ENCODE measurements at regions of chr1 and their contacts with region 1.

Region 1: DNA sequence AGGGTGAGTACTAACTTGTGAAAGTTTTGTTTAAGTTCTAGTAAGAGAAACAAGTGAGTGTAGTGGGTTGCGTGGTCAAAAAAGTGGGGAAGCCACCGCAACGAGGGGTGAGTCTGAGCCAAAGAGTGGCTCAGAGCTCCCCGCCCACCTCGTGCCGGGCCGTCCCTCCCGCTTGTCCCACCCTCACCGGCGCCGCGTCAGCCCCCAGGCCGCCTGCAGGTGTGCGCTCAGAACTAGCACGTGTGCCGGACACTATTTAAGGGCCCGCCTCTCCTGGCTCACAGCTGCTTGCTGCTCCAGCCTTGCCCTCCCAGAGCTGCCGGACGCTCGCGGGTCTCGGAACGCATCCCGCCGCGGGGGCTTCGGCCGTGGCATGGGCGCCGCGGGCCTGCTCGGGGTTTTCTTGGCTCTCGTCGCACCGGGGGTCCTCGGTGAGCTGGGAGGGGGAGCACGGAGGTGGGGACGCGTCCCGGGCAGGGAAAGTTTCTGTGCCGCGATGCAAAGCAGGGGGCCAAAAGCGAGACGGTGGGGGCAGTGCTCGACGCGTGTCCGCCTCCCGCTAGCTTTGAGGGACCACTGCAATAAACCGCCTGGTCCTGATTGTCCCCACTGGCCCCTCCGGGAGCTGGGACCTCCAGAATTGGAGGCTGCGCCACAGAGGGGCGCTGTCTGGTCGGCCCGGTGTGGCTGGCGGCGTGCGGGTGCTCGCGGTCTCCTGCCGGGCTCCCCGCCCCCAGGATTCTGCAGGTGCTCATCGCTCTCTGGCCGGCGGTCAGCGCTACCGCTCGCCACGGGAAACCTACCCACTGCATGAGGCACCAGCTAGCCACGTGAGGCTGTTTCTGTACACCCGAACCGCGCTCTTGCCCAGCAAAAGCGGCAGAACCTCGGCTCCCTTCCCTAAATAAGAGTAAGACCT is at the start of gene CR2:
- DNase-seq: peak; percentile 42 to 74 (median 52)
- ATAC-seq: peak; percentile 76 to 80
- H3K4me3 Mint-ChIP-seq: peak within 1 kb of the TSS in 9 of 10 donors; percentile 69 to 87 (median 78)
- H3K27ac Mint-ChIP-seq: peak within 1 kb of the TSS in 6 of 10 donors; percentile 60 to 84 (median 66)
- H3K4me1 Mint-ChIP-seq: peaks cover 0 to 14% (median 8%) of the 10 kb centered on the region in 4 donors
- H3K27me3 Mint-ChIP-seq: peaks cover 0 to 23% (median 4%) of the 10 kb centered on the region in 5 donors
- polyA plus RNA-seq, gene CR2: 10.9 to 17.1 (median 11.2) TPM

Region 2: DNA sequence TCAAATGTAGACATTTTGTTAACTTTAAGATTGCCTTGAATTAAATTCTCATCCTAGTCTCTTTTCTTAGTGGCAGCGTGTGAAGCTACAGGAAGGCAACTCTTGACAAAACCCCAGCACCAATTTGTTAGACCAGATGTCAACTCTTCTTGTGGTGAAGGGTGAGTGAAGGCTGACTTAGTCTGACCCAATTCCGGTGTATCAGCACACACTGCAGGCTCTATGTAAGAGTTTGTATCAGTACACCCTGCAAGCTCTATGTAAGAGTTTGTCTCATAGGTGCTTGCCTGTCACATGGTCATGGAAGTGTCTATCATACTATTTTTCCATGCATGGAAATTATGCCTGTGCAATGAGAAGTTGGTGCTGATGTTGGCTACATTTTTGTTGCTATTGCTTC is 16.6 kb after region 1 on chr1:
- POLR2A ChIA-PET with region 1: interaction called, 11 read pairs
- DNase-seq: peak in 9 of 10 donors; percentile 7 to 81 (median 47)
- ATAC-seq: peak; percentile 99 to 100
- H3K4me3 Mint-ChIP-seq: peak overlapping the region in 5 of 10 donors; percentile 1 to 36 (median 11)
- H3K27ac Mint-ChIP-seq: peak overlapping the region in 9 of 10 donors; percentile 1 to 90 (median 83)
- H3K4me1 Mint-ChIP-seq: peaks cover 14 to 42% (median 24%) of the 10 kb centered on the region in 4 donors
- H3K27me3 Mint-ChIP-seq: no peaks in the 10 kb centered on the region

Region 3: DNA sequence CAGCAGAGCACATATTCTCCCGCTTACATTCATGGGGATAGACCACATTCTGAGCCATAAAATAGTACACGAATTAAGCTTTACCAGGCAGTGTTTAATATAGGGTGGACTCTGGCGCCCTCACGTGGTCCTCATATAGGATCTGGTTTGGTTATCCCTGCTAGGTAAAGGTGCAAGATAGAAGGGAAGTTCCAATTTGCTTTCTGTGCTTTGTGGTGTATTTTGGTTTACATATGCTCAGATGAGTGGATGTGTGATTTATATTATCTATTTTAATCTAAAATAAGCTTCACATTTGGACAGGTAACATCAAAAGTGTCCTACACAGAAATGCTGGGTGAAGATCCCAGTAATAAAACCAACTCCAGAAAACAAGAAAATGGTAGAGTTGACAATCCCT is 45.3 kb after region 1 on chr1:
- POLR2A ChIA-PET with region 1: interaction called, 18 read pairs
- DNase-seq: peak; percentile 53 to 85 (median 64)
- ATAC-seq: peak; percentile 73 to 80
- H3K4me3 Mint-ChIP-seq: no peak overlapping the region
- H3K27ac Mint-ChIP-seq: no peak overlapping the region
- H3K4me1 Mint-ChIP-seq: peaks cover 1 to 31% (median 15%) of the 10 kb centered on the region in 4 donors
- H3K27me3 Mint-ChIP-seq: peaks cover 18 to 25% (median 21%) of the 10 kb centered on the region in 5 donors

Measured in naive thymus-derived CD8-positive, alpha-beta T cell (primary cell).